Heart left ventricle (tissue), 16 donors: ENCODE measurements at regions of chr3 and their contacts with region 1.

Region 1: GRCh38 chr3:120245386-120245785 is 39.6 kb downstream of the GPR156 start:
- DNase-seq: no peak
- ATAC-seq: no peak
- H3K4me3 ChIP-seq: no peak overlapping the region
- H3K27ac ChIP-seq: no peak overlapping the region
- H3K4me1 ChIP-seq: no peaks in the 10 kb centered on the region
- H3K27me3 ChIP-seq: peaks cover 0 to 8% (median 0%) of the 10 kb centered on the region in 9 donors
- CTCF ChIP-seq: no peak
- POLR2A ChIP-seq: no peak

Region 2: GRCh38 chr3:120348981-120349818 is 103.8 kb after region 1 on chr3 and contains the start of gene LRRC58:
- intact Hi-C with region 1: loop called in 1 of 10 experiments (anchors 10 kb)
- DNase-seq: peak; percentile 88 to 96 (median 92)
- ATAC-seq: peak; percentile 97 to 98 (median 97)
- H3K4me3 ChIP-seq: peak within 1 kb of the TSS; percentile 69 to 97 (median 84)
- H3K27ac ChIP-seq: peak within 1 kb of the TSS; percentile 80 to 94 (median 88)
- H3K4me1 ChIP-seq: peaks cover 0 to 41% (median 16%) of the 10 kb centered on the region in 12 donors
- H3K27me3 ChIP-seq: no peaks in the 10 kb centered on the region
- CTCF ChIP-seq: peak in 8 of 12 donors; percentile 10 to 54 (median 31)
- POLR2A ChIP-seq: peak; percentile 9 to 83
- total RNA-seq, gene LRRC58: 7.1 to 17.9 (median 10.5) TPM

Region 3: DNA sequence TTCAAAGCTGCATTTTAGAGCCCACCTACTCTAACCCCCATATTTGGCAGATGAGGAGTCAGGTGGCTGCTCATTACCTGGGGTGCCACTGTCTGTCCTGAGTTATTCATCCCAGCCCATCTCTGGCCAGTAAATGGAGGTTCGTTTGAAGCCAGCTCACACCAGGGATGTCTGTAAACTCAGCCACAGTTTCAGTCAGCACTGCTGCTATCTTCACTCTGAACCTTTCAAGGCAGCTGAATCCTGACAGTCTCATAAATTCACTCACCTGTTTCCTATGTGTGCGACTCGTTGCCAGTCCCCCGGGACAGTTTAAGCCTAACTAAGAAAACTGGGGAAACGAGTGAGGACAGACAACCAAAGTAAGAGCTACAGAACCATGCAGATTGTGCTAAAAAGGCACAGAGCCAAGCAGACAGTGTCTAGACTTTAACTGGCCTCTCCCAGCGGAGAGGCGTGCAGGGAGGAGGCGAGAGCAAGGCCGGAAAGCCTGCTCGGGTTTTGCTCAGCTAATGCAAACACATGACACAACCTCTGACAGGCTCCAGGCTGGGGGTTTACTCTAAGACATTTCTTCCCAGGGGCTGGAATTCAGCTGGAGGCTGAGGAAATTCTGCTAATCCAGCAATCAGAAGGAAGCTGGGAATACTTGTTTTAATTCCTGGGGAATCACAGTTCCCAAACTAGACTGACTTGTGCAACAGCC is 193.4 kb after region 1 on chr3:
- intact Hi-C with region 1: no loop called
- DNase-seq: peak; percentile 75 to 83 (median 82)
- ATAC-seq: peak; percentile 53 to 82 (median 80)
- H3K4me3 ChIP-seq: no peak overlapping the region
- H3K27ac ChIP-seq: peak overlapping the region in 11 of 12 donors; percentile 30 to 87 (median 70)
- H3K4me1 ChIP-seq: peaks cover 14 to 99% (median 84%) of the 10 kb centered on the region in 12 donors
- H3K27me3 ChIP-seq: no peaks in the 10 kb centered on the region
- CTCF ChIP-seq: no peak
- POLR2A ChIP-seq: no peak

Region 4: GRCh38 chr3:120795017-120795648 is 549.7 kb after region 1 on chr3:
- intact Hi-C with region 1: loop called in 9 of 10 experiments (anchors 2 to 10 kb)
- DNase-seq: peak; percentile 64 to 84 (median 76)
- ATAC-seq: peak; percentile 80 to 93 (median 90)
- H3K4me3 ChIP-seq: no peak overlapping the region
- H3K27ac ChIP-seq: no peak overlapping the region
- H3K4me1 ChIP-seq: no peaks in the 10 kb centered on the region
- H3K27me3 ChIP-seq: no peaks in the 10 kb centered on the region
- CTCF ChIP-seq: peak; percentile 60 to 87 (median 80)
- POLR2A ChIP-seq: no peak